ENCODE measurements at regions of chr2 and their contacts with region 1.

Region 1: DNA sequence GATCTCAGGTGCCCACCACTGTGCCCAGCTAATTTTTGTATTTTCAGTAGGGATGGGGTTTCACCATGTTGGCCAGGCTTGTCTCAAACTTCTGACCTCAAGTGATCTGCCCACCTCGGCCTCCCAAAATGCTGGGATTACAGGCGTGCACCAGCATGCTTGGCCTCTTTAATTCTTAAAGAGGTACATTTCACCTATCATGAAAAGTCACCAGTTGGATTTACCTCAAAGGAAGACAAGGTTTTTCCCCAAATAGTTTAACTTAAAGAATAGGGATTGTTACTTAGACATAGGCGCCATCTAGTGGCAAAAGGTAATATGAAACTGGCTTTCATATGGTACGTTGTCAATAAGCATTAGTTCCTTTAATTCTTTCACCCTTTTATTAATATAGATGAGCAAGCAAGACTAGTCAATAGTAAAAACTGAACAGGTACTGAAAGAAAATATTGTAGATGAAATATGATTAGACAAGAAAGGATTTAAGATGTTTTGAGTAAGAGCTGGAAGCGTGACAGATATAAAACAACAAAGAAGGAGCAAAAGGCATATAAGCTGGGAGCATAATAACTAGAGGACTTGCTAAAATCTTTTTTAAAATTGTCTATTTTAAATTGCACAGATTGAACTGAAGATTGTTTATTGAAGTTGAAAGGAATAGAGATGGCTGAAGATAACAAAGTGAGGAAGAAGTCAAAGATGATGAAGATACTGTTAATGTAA is 35.0 kb upstream of the PSMD14 start:
- DNase-seq: peak in 2 of 5 donors; percentile 46 to 52
- H3K4me3 ChIP-seq: no peak overlapping the region
- H3K4me3 Mint-ChIP-seq: no peak overlapping the region
- H3K27ac ChIP-seq: no peak overlapping the region
- H3K27ac Mint-ChIP-seq: no peak overlapping the region
- H3K4me1 ChIP-seq: no peaks in the 10 kb centered on the region
- H3K4me1 Mint-ChIP-seq: peaks cover 0 to 4% (median 3%) of the 10 kb centered on the region in 3 donors
- H3K27me3 ChIP-seq: no peaks in the 10 kb centered on the region
- H3K27me3 Mint-ChIP-seq: peaks cover 3 to 33% of the 10 kb centered on the region in 2 donors

Region 2: GRCh38 chr2:161283926-161284325 is 10.7 kb after region 1 on chr2:
- CTCF ChIA-PET with region 1: interaction called, 12 read pairs
- POLR2A ChIA-PET with region 1: no interaction called
- DNase-seq: no peak
- H3K4me3 ChIP-seq: no peak overlapping the region
- H3K4me3 Mint-ChIP-seq: no peak overlapping the region
- H3K27ac ChIP-seq: no peak overlapping the region
- H3K27ac Mint-ChIP-seq: no peak overlapping the region
- H3K4me1 ChIP-seq: no peaks in the 10 kb centered on the region
- H3K4me1 Mint-ChIP-seq: peaks cover 0 to 4% (median 0%) of the 10 kb centered on the region in 3 donors
- H3K27me3 ChIP-seq: no peaks in the 10 kb centered on the region
- H3K27me3 Mint-ChIP-seq: peaks cover 7 to 25% of the 10 kb centered on the region in 2 donors

Region 3: DNA sequence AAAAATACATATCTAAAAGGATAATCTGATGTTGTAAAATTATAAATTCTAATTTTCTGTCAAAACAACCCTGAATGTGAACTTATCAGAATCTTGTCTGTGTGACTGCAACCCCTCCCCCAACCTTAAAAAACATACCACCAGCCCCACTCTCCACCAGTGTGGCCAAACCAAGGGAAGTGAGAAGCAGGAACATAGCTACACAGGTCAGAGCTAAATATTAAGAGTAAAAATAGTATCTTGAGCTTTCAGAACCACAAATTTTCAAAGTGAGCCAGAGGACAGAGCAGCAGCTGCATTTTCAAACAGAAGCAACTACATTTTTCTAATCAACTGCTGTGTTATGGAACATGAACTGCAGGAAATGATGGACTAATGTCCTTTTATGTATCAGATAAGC is 507.7 kb after region 1 on chr2:
- CTCF ChIA-PET with region 1: no interaction called
- POLR2A ChIA-PET with region 1: no interaction called
- DNase-seq: no peak
- H3K4me3 ChIP-seq: no peak overlapping the region
- H3K4me3 Mint-ChIP-seq: no peak overlapping the region
- H3K27ac ChIP-seq: no peak overlapping the region
- H3K27ac Mint-ChIP-seq: no peak overlapping the region
- H3K4me1 ChIP-seq: no peaks in the 10 kb centered on the region
- H3K4me1 Mint-ChIP-seq: no peaks in the 10 kb centered on the region
- H3K27me3 ChIP-seq: no peaks in the 10 kb centered on the region
- H3K27me3 Mint-ChIP-seq: no peaks in the 10 kb centered on the region

Measured in CD8-positive, alpha-beta memory T cell (primary cell).